ENCODE measurements at regions of chr5 and their contacts with region 1.

Region 1: DNA sequence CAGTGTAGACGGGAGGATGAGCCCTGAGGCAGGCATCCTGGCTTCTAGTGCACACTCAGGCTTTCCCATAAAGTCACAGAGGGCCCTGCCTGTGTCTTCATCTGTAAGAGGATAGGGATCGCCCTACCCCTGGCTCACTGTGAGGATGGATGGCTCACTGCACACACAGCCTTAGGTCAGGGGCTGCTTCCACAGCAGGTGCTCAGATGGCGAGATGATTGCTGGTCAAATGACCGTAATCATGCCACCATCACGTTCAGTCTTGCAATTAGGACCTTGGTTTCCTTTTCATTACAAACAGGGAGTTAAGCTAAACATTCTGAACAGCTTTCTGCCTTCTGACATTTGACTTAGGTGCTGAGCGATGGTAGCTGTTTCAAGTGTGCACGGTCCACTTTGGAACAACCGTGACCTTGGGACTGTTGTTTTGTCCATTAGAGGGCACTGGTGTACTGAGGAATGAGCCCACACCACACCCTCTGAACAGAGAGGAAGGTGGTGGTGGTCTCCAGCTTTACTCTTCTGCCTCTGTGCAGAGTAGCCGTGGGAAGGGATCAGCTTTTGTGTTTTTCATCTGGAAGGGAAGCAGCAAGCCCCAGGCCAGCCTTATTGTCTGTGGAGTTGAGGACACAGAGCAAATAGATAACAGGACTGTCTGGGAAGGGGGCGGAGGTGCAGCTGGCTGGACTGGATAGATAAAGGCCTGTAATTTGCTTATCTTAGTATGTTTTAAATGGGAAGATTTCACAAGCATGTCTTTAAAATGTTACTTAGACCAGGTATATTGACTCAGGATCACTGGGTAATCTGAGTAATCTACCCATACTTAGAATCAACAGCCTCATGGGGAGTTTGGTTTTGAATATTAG is 183.1 kb downstream of the TRIO start:
- DNase-seq: peak; percentile 42
- H3K4me3 ChIP-seq: no peak overlapping the region
- H3K27ac ChIP-seq: peak overlapping the region in 1 of 2 experiments; percentile 67; a peak in 2 of 4 replicates
- H3K4me1 ChIP-seq: peaks cover 0 to 11% of the 10 kb centered on the region in 2 experiments; a peak in 1 of 4 replicates
- H3K27me3 ChIP-seq: no peaks in the 10 kb centered on the region
- CTCF ChIP-seq: peak; percentile 47
- EP300 ChIP-seq: no peak
- RAD21 ChIP-seq: peak; percentile 50; the same call in 1 of the 2 replicates

Region 2: GRCh38 chr5:14351845-14352712 is 25.8 kb after region 1 on chr5:
- CTCF ChIA-PET with region 1: interaction called, 12 read pairs
- POLR2A ChIA-PET with region 1: no interaction called
- DNase-seq: peak; percentile 83
- H3K4me3 ChIP-seq: no peak overlapping the region
- H3K27ac ChIP-seq: no peak overlapping the region
- H3K4me1 ChIP-seq: peaks cover 6 to 11% of the 10 kb centered on the region in 2 experiments; a peak in 2 of 4 replicates
- H3K27me3 ChIP-seq: no peaks in the 10 kb centered on the region
- CTCF ChIP-seq: peak; percentile 95
- EP300 ChIP-seq: no peak
- RAD21 ChIP-seq: peak; percentile 88

Region 3: GRCh38 chr5:14364576-14365472 is 38.6 kb after region 1 on chr5:
- CTCF ChIA-PET with region 1: interaction called, 13 read pairs
- POLR2A ChIA-PET with region 1: no interaction called
- DNase-seq: peak; percentile 59
- H3K4me3 ChIP-seq: no peak overlapping the region
- H3K27ac ChIP-seq: peak overlapping the region in 1 of 2 experiments; percentile 28; a peak in 1 of 4 replicates
- H3K4me1 ChIP-seq: peaks cover 0 to 11% of the 10 kb centered on the region in 2 experiments; a peak in 2 of 4 replicates
- H3K27me3 ChIP-seq: no peaks in the 10 kb centered on the region
- CTCF ChIP-seq: peak; percentile 60
- EP300 ChIP-seq: no peak
- RAD21 ChIP-seq: no peak

Measured in SK-N-SH (cell line).